Right ventricle myocardium superior (tissue), 1 donor: ENCODE measurements at regions of chr15 and their contacts with region 1.

Region 1: DNA sequence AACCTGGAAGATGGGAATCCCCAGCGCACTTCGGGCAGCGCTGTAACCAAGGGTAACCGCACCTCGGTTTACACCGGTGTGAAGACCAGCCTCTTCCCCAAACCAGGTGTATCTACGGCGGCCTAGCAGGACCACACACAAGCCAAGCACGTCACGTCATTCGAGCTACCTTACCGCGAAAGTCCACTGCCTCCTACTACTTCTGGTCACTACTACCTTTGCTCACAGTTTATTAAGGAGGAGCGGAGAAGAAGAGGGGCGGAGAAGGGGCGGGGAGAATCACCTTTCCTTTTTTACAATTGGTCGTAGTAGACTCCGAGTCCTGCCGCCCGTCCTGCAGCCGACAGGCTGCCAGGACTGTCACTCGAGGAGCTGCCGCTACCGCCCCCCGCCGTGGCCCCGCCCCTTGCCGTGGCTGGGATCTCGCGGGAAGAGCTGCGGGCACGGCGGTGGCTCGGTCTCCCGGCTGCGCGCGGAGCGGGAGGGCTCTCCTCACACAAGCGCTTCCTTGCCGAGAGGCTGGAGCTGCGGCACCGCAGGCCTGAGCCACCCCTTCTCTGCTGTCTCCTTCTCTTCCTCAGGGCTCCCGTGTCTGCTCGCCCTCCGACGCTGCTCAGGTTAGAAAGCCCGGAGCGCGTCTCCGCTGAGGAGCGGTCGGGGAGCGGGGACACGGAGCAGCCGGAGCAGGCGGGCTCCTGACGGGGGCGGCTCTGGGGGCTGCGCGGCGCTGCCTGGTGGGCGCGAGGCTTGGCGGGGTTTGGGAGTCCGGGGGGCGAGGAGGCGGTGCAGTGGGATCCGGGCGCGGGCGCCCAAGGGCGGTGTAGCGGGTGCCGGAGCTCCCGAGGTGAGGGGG is at the start of gene GLCE:
- DNase-seq: peak; percentile 97
- ATAC-seq: peak; percentile 99
- total RNA-seq, gene GLCE: 7.6 TPM

Region 2: GRCh38 chr15:68930268-68931022 is 229.9 kb before region 1 on chr15 and contains the start of gene SPESP1:
- intact Hi-C with region 1: no loop called
- DNase-seq: peak; percentile 80
- ATAC-seq: peak; percentile 97
- total RNA-seq, gene SPESP1: 7.6 TPM

Region 3: DNA sequence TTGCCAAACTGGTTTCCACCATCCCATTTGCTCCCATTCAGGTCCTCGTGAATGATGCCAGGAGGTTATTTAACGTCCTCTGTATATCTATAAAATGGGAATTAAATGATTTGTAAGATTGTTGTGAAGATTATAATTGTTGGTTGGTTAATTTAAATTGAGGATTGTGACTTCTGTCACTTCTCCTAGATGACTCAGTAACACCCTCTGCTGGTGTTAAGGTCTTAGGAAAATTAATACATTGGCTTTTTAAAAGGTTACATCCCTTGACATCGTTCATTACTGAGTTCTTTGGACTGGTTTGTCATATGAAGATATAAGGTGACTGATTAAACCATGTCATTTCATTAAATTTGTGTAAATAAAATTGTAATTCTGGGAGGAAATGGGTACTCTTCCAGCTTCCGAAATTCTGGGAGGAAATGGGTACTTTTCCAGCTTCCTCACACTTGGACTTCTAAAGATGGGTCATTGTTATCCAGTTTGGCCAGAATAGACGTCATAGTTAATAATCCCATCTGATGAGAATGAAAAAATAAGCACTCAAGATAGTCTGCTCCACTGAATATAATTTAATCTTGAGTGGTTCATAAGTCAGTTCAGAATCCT is 105.1 kb after region 1 on chr15:
- intact Hi-C with region 1: loop called (anchors 10 kb)
- DNase-seq: no peak
- ATAC-seq: no peak

Region 4: DNA sequence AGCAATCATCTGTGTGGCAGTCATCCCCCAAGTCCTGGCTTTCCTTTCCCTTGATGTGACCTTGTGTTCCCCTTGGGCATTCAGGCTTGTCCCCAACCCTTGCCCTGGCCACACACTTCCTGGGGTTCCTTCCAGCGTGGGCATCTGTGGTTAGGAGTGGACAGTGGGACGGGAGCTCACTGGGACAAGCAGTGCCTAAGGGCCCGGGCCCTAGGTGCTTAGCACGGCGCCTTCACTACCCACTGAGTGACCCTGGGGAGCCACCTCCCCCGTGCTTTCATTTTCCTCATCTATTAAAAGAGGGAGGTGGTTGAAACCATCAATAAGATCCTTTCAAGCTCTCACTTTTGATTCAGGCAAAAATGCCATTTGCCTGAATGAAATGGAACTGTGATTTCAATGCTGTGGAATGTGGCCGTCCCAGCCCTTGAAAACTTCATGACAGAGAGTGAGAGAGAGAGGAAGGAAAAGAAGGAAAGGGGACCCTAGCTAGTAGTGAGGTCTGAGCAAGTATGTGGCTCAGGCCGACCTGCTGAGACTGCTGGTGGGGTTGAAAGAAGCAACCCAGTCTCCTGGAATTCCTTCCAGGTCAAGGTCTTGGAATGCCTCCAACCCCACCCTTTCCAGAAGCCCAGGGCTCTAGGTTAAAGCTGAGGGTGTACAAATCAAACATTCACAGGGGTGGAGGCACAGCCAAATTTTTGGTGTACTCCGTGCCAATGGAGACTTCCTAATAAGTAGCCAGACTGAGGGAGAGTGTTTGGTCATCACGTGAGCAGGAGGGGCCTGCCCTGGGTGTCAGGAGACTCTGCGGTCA is 634.5 kb after region 1 on chr15:
- intact Hi-C with region 1: no loop called
- DNase-seq: peak; percentile 56
- ATAC-seq: peak; percentile 82

Region 5: DNA sequence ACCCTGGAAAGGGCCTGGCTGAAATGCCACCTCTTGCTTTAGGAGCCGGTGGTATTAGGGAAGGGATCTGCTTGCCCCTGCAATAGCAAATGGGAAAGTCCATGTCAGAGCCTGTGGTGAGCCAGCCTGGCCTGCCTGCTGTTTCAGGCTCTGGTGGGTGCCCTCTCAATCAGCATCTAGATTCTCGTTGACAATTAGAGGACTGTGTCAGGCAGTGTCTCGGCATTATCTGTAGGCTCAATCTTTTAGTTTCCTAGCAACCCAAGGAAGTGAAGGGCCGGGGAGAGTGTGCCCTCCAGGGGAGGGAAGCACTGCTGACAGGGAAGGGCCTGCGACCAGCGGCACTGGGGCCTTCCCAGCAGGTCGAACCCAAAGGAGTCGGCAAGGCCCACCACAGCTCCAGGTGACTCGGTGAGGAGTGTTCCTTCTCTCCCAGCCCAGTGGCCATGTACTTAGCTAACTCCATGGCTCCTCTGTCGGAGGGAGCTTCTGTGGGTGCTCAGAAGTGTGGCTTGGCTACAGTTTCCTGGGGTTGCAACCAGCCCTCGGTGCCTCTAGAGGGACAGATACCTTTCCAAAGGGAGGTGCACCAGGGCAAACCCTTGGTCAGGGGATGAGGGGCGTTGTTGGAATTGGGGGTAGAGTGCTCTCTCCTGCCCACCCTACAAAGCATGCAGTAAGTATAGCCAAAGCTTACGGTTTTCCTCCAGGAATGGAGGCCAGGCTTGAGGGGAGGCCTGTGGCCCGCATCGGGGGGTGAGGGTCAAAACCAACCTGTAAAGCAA is 895.4 kb after region 1 on chr15:
- intact Hi-C with region 1: no loop called
- DNase-seq: no peak
- ATAC-seq: no peak